Cardiac septum (tissue), 1 donor: ENCODE measurements at regions of chr3 and their contacts with region 1.

Region 1: DNA sequence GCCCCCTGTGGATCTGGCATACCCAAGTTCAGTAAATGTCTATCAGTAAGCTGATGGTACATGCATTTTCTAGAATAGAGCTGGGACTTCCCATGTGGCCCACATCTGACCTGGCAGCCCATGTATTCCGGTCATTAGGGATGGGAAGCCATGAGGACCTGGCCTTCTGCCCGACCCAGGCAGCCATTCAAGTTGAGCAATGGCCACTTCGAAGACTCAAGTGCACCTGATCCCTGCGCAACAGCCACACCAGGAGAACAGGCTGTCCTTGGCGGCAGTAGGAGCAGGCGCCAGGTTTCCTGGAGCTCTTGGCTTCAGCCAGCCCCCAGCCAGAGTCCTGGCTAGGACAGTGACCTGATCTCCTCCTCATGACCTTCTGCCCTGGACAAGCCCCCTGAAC is 14.6 kb downstream of the HEMK1 start:
- DNase-seq: peak; percentile 84

Region 2: DNA sequence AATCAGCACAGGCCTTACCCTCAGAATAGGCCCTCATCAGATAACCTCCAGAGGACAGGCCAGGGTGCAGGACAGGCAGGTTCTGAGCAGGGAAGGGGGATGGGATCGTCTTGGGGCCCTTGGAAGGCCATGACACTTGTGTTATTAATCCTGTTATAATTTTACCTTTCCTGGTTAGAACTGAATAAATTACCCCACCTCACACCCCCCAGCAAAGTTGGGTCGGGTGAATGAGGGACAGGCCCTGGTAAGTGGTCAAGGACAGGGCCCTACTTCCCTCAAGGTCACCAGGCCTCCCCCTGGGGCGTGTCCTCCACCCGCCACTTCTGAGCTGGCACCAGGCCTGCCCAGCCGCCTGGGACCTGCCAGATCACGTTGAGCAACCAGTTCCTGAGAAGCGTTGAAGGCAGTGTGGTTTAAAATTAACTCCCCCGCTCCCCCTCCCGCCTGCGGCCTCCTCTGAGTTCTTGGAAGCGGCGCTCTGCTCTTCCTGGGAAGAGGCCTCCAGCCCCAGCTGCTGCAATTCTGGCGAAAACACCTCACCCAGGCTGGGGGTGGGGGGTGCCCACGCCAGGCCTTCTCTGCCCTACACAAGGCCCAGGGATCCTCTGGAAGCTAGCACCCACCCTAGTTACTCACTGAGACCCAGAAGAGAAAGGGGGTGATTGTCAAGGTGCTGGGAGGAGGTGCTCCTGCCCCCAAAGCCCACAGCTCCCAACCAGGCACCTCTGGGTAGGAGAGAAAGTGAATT is 17.1 kb after region 1 on chr3:
- intact Hi-C with region 1: loop called (anchors 2 kb)
- DNase-seq: peak; percentile 98